SK-MEL-5 (cell line): ENCODE measurements at regions of chr3 and their contacts with region 1.

Region 1: GRCh38 chr3:14261229-14261628 is 82.6 kb downstream of the LSM3 start:
- DNase-seq: peak; percentile 82

Region 2: GRCh38 chr3:14947886-14948555 is 686.8 kb after region 1 on chr3:
- in situ Hi-C with region 1: loop called (anchors 25 kb)
- DNase-seq: peak; percentile 96